ENCODE measurements at regions of chr12 and their contacts with region 1.

Region 1: DNA sequence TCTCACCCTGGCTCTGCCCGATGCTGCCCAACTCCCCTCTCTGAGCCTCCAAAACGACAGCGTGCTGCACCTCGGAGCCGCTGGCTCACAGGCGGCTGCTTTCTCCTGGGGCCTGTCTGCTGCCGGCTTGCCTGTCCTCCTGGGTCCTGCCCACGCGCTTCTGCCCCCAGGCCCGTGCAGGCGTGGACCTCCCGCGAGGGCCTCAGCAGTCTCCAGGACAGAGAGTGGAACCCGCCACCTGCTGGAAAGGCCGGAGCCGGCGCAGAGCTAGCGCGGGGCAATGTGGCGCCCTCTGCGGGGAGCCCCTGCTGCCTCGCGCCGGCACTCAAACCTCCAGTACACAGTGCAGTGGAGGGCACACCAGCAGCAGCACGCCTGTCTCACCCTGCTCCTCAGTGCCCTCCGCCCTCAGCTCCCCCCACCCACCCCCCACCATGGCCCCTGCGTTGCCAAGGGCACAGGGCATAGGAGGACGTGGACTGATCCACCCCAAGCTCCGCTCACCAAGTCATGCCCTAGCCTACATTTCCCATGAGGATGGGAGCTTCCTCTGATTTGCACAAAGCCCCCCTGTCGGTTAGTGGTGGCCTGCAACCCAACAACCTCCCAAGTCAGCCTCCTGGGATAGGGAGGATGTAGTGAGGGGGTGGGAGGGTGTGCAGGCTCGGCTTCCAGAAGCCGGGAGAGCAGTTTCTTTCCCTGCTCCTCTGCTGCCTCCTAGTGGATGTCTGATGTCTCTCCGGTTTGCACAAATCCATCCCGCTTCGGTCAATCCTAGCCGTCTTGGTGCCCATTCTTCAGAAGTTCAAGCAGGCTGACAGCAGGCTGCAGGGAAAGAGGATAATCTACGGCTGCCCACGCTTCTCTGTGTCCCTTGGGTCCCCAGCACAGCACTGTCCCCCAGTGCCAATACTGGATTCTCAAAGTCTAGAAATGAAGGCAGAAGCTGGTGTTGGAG is 25.2 kb downstream of the KRT8 start:
- DNase-seq: peak; percentile 84
- H3K4me3 Mint-ChIP-seq: peak overlapping the region; percentile 54
- H3K27ac Mint-ChIP-seq: no peak overlapping the region
- H3K4me1 Mint-ChIP-seq: peaks cover 10% of the 10 kb centered on the region
- H3K27me3 Mint-ChIP-seq: peaks cover 30% of the 10 kb centered on the region

Region 2: GRCh38 chr12:52362118-52362726 is 517.5 kb before region 1 on chr12:
- CTCF ChIA-PET with region 1: interaction called, 12 read pairs
- DNase-seq: peak; percentile 25
- H3K4me3 Mint-ChIP-seq: no peak overlapping the region
- H3K27ac Mint-ChIP-seq: no peak overlapping the region
- H3K4me1 Mint-ChIP-seq: peaks cover 12% of the 10 kb centered on the region
- H3K27me3 Mint-ChIP-seq: peaks cover 25% of the 10 kb centered on the region

Region 3: GRCh38 chr12:52380271-52380694 is 499.4 kb before region 1 on chr12:
- CTCF ChIA-PET with region 1: interaction called, 13 read pairs
- DNase-seq: peak; percentile 45
- H3K4me3 Mint-ChIP-seq: no peak overlapping the region
- H3K27ac Mint-ChIP-seq: no peak overlapping the region
- H3K4me1 Mint-ChIP-seq: peaks cover 10% of the 10 kb centered on the region
- H3K27me3 Mint-ChIP-seq: peaks cover 33% of the 10 kb centered on the region

Region 4: GRCh38 chr12:52590021-52590420 is 289.7 kb before region 1 on chr12:
- CTCF ChIA-PET with region 1: interaction called, 162 read pairs
- DNase-seq: no peak
- H3K4me3 Mint-ChIP-seq: no peak overlapping the region
- H3K27ac Mint-ChIP-seq: no peak overlapping the region
- H3K4me1 Mint-ChIP-seq: peaks cover 24% of the 10 kb centered on the region
- H3K27me3 Mint-ChIP-seq: no peaks in the 10 kb centered on the region

Region 5: GRCh38 chr12:52844386-52844785 is 35.3 kb before region 1 on chr12:
- CTCF ChIA-PET with region 1: no interaction called
- DNase-seq: no peak
- H3K4me3 Mint-ChIP-seq: no peak overlapping the region
- H3K27ac Mint-ChIP-seq: no peak overlapping the region
- H3K4me1 Mint-ChIP-seq: no peaks in the 10 kb centered on the region
- H3K27me3 Mint-ChIP-seq: peaks cover 32% of the 10 kb centered on the region

Region 6: DNA sequence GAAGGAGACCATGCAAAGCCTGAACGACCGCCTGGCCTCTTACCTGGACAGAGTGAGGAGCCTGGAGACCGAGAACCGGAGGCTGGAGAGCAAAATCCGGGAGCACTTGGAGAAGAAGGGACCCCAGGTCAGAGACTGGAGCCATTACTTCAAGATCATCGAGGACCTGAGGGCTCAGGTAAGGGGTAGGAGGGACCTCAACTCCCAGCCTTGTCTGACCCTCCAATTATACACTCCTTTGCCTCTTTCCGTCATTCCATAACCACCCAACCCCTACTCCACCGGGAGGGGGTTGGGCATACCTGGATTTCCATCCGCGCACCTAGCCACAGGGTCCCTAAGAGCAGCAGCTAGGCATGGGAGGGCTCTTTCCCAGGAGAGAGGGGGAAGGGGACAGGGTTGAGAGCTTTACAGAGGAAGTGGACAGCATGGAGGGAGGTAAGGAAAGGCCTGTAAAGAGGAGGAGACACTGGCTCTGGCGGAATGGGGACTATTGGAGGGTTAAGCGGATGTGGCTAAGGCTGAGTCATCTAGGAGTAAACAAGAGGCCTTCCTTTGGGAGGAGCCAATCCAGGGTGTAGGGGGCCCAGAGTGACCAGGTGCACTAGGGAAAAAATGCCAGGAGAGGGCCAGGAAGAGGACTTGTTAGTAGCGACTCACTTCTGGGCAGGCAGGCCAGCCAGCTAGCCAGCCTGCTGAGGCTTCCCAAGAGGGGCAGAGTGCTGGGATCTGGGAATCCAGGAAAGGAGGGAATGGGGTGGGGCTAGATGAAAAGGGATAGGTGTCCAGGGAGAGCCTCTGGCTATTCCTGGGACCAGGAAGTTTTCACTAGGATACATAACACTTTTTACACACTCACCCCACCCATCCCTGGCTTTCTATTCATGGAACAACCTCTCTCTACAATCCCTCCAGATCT is 70.0 kb after region 1 on chr12:
- CTCF ChIA-PET with region 1: interaction called, 19 read pairs
- DNase-seq: no peak
- H3K4me3 Mint-ChIP-seq: peak overlapping the region; percentile 68
- H3K27ac Mint-ChIP-seq: no peak overlapping the region
- H3K4me1 Mint-ChIP-seq: peaks cover 8% of the 10 kb centered on the region
- H3K27me3 Mint-ChIP-seq: peaks cover 42% of the 10 kb centered on the region

Region 7: GRCh38 chr12:52980693-52981423 is 101.2 kb after region 1 on chr12:
- CTCF ChIA-PET with region 1: interaction called, 427 read pairs
- DNase-seq: peak; percentile 89
- H3K4me3 Mint-ChIP-seq: no peak overlapping the region
- H3K27ac Mint-ChIP-seq: no peak overlapping the region
- H3K4me1 Mint-ChIP-seq: no peaks in the 10 kb centered on the region
- H3K27me3 Mint-ChIP-seq: peaks cover 48% of the 10 kb centered on the region

Region 8: GRCh38 chr12:53129170-53129569 is 249.5 kb after region 1 on chr12:
- CTCF ChIA-PET with region 1: no interaction called
- DNase-seq: no peak
- H3K4me3 Mint-ChIP-seq: no peak overlapping the region
- H3K27ac Mint-ChIP-seq: no peak overlapping the region
- H3K4me1 Mint-ChIP-seq: no peaks in the 10 kb centered on the region
- H3K27me3 Mint-ChIP-seq: peaks cover 37% of the 10 kb centered on the region

Measured in activated naive CD4-positive, alpha-beta T cell treated with anti-CD3 and anti-CD28 coated beads, Interleukin-2, amount 10 ng/mL, durations not matched to agents 7 days and 5 days (primary cell).